Aorta (tissue), 5 donors: ENCODE measurements at regions of chr1 and their contacts with region 1.

Region 1: GRCh38 chr1:164440232-164440631 is 118.8 kb upstream of the PBX1 start:
- DNase-seq: no peak
- ATAC-seq: peak; percentile 62
- H3K4me3 ChIP-seq: no peak overlapping the region
- H3K27ac ChIP-seq: no peak overlapping the region
- H3K4me1 ChIP-seq: peaks cover 0 to 5% of the 10 kb centered on the region in 2 donors
- H3K27me3 ChIP-seq: no peaks in the 10 kb centered on the region

Region 2: GRCh38 chr1:164311371-164311770 is 128.9 kb before region 1 on chr1:
- intact Hi-C with region 1: no loop called
- DNase-seq: no peak
- ATAC-seq: no peak
- H3K4me3 ChIP-seq: no peak overlapping the region
- H3K27ac ChIP-seq: no peak overlapping the region
- H3K4me1 ChIP-seq: no peaks in the 10 kb centered on the region
- H3K27me3 ChIP-seq: no peaks in the 10 kb centered on the region

Region 3: GRCh38 chr1:164617377-164618201 is 177.4 kb after region 1 on chr1:
- intact Hi-C with region 1: loop called in 1 of 2 experiments (anchors 10 kb)
- DNase-seq: no peak
- ATAC-seq: peak; percentile 39
- H3K4me3 ChIP-seq: no peak overlapping the region
- H3K27ac ChIP-seq: no peak overlapping the region
- H3K4me1 ChIP-seq: peaks cover 2% of the 10 kb centered on the region in 2 donors
- H3K27me3 ChIP-seq: no peaks in the 10 kb centered on the region

Region 4: GRCh38 chr1:164772635-164773034 is 332.4 kb after region 1 on chr1:
- intact Hi-C with region 1: loop called in 1 of 2 experiments (anchors 10 kb)
- DNase-seq: peak; percentile 69 to 84
- ATAC-seq: peak; percentile 52
- H3K4me3 ChIP-seq: no peak overlapping the region
- H3K27ac ChIP-seq: peak overlapping the region; percentile 59 to 82
- H3K4me1 ChIP-seq: peaks cover 3% of the 10 kb centered on the region in 2 donors
- H3K27me3 ChIP-seq: no peaks in the 10 kb centered on the region